ENCODE measurements at regions of chr10 and their contacts with region 1.

Region 1: DNA sequence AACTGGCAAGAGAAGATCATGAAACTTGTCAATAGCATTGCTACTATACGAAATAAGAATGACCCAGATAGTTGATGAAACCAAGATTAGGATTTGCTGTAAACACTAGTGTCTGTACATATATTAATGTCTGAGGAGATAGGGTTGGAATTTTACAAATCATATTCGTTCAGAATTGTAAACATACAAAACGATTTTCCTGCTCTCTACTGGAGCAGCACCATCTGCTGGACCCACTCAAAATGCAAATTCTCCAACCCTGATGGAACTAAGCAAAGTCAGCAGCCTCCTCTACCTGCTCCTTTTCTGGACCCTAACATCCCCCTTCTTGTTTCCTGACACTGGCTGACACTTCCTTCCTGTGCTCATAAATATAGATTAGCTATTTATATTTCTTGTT is 29.4 kb upstream of the SGMS1 start:
- DNase-seq: peak; percentile 56
- H3K4me3 Mint-ChIP-seq: no peak overlapping the region
- H3K27ac Mint-ChIP-seq: no peak overlapping the region
- H3K4me1 Mint-ChIP-seq: peaks cover 13% of the 10 kb centered on the region
- H3K27me3 Mint-ChIP-seq: peaks cover 2% of the 10 kb centered on the region

Region 2: DNA sequence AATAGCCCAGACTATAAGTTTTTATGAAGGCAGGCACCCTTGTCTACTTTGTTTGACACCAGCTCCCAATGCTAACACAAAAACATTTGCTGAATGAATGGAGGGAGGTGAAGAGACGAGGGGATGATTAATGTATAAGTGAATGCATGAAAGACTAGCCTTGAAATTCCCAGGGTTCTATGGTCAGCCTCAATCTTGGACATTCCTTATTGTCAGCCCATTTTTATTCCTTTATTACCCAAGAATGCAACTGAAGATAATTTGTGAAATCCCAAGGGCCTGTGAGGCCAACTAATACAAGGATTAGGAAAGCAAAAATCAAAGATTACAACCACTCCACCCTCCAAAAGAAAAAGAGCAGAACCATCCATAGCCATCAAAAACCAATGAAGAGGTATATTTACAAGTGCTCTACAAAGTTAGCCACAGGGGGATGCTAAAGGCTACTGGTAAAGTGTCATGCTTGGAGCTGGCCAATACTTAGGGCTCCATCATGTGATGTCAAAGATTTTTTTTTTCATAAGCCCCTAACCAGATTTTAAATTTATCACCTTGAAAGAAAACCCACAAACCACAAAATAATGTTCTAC is 361.8 kb before region 1 on chr10:
- CTCF ChIA-PET with region 1: no interaction called
- intact Hi-C with region 1: loop called (anchors 5 kb)
- DNase-seq: no peak
- H3K4me3 Mint-ChIP-seq: no peak overlapping the region
- H3K27ac Mint-ChIP-seq: no peak overlapping the region
- H3K4me1 Mint-ChIP-seq: no peaks in the 10 kb centered on the region
- H3K27me3 Mint-ChIP-seq: no peaks in the 10 kb centered on the region

Region 3: DNA sequence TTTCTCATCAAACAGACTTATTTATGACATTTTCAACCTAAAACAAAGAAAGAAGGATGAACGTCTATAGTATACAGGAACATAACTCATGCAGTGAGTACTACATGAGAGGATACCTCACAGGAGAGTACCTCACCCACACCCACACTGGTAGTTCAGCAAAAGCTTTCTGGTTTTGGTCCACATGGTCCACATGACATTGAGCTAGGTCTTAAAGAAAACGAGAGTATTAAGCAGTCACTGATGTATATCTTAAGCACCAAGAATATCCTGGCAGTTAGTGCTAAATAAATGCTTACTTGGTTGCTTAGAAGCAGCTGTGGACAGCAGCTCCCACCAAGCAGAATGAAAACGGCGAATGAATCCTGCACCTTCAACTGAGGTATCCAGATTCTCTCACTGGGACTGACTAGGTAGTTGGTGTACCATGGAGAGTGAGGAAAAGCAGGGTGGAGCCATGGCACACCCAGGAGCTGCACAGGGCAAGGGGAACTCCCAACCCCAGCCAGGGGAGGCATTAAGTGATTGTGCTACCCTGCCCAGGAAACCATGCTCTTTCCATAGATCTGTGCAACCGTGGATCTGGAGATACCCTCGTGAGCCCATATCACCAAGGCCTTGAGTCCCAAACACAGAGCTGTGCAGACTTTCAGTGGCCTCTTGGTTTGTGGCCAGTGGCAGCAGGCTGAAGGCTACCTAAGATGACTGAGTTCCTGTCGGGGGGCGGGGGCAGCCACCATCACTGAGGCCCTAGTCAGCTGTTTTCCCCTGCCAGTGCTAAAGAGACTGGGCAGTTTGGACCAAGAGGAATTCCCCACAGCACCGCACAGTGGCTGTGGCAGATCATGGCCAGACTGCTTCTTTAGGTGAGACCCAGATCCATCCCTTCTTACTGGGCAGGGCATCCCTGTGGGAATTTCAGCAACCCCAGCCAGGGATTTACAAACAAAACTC is 172.8 kb before region 1 on chr10:
- CTCF ChIA-PET with region 1: no interaction called
- intact Hi-C with region 1: no loop called
- DNase-seq: no peak
- H3K4me3 Mint-ChIP-seq: no peak overlapping the region
- H3K27ac Mint-ChIP-seq: no peak overlapping the region
- H3K4me1 Mint-ChIP-seq: peaks cover 5% of the 10 kb centered on the region
- H3K27me3 Mint-ChIP-seq: no peaks in the 10 kb centered on the region

Region 4: DNA sequence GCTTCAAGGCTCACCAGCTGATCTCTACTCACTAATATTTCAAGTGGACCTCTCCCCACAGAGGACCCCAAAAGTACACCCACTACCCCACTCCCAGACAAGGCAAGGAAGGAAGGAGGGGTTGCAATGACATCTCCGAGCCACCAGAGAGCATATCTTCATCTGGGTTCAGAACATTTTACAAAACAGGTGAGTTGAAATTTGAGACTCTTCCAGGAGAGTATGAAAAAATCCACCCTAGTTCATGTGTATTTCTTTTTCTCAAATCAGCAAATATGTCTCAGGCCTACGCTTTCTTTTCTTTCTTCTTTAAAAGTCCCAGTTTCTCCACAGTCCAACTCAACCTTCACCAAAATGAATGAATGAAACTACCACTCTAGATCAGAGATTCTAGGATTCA is 91.3 kb before region 1 on chr10:
- CTCF ChIA-PET with region 1: interaction called, 3 read pairs
- intact Hi-C with region 1: loop called (anchors 1 kb)
- DNase-seq: no peak
- H3K4me3 Mint-ChIP-seq: no peak overlapping the region
- H3K27ac Mint-ChIP-seq: no peak overlapping the region
- H3K4me1 Mint-ChIP-seq: peaks cover 16% of the 10 kb centered on the region
- H3K27me3 Mint-ChIP-seq: no peaks in the 10 kb centered on the region

Region 5: GRCh38 chr10:50636618-50637579 is 16.2 kb before region 1 on chr10:
- CTCF ChIA-PET with region 1: interaction called, 12 read pairs
- intact Hi-C with region 1: no loop called
- DNase-seq: peak; percentile 55
- H3K4me3 Mint-ChIP-seq: no peak overlapping the region
- H3K27ac Mint-ChIP-seq: peak overlapping the region; percentile 9
- H3K4me1 Mint-ChIP-seq: peaks cover 27% of the 10 kb centered on the region
- H3K27me3 Mint-ChIP-seq: peaks cover 4% of the 10 kb centered on the region

Measured in activated naive CD4-positive, alpha-beta T cell treated with anti-CD3 and anti-CD28 coated beads for 36 hours (primary cell).